ENCODE measurements at regions of chr19 and their contacts with region 1.

Region 1: DNA sequence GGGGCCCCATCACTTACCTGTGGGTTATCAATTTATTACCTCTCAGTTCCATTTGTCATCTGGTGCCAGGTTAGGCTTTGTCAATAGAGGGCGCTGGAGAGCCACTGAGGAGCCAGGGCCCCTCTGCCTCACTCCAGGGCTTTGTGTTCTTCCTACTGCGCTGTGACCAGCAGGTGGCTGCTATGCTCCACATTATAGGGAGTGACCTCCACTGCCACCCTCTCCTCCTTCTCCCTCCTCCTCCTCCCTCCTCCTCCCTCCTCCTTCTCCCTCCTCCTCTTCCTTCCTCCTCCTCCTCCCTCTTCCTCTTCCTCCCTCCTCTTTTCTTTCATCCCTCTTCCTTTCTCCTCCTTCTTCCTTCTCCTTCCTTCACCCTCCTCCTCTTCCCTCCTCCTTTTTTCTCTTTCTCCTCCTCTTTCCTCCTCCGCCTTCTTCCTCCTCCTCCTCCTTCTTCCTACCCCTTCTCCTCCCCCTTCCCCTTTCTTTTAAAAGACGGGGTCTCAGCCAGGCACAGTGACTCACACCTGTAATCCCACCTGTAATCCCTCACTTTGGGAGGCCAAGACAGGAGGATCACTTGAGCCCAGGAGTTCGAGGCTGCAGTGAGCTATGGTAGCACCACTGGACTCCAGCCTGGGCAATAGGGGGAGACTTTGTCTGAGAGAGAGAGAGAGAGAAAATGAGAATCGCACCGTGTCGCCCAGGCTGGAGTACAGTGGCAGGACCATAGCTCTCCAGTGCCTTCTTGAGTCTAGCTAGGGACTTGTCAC is 10.3 kb upstream of the ZBTB32 start:
- DNase-seq: peak; percentile 97
- H3K4me3 Mint-ChIP-seq: no peak overlapping the region
- H3K27ac Mint-ChIP-seq: peak overlapping the region; percentile 77
- H3K4me1 Mint-ChIP-seq: peaks cover 24% of the 10 kb centered on the region
- H3K27me3 Mint-ChIP-seq: no peaks in the 10 kb centered on the region

Region 2: DNA sequence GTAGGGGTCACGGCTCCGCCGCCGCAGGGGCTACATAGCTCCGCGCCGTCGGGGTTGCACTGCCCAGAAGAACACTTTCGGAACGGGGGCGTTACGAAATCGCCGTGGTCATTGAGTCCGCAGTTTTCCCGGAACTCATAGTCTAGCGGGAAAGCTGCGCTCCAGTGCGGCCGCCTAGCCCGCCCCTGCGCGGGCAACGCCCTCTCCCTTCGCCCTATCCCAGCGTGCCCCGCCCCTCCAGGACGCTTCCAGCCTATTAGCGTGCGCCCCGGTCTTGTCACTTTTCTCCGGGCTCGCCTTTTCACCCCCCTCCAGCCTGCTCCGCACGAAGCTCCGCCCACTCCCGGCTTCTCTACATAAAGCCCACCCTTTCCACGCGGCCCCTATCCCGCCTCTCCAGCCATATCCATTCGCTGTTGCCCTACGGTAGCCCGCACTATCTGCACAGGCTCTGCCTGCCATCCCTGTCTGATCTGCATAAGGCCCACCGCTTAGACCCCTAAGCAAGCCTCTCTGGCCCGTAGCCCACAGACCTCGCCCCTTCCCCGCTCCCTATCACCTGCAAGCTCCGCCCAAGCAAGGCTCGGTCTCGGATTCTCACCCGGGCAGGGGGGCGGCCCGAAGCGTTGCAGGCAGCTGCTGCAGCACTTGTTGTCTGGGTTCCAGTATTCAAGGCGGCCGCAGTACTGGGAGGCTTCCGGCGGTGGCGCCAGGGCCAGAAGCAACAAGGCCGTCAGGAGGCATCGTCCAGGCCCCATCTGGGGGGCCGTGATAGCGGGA is 46.6 kb after region 1 on chr19:
- CTCF ChIA-PET with region 1: interaction called, 10 read pairs
- intact Hi-C with region 1: loop called (anchors 1 kb)
- DNase-seq: peak; percentile 99
- H3K4me3 Mint-ChIP-seq: peak overlapping the region; percentile 89
- H3K27ac Mint-ChIP-seq: peak overlapping the region; percentile 97
- H3K4me1 Mint-ChIP-seq: peaks cover 41% of the 10 kb centered on the region
- H3K27me3 Mint-ChIP-seq: no peaks in the 10 kb centered on the region

Region 3: DNA sequence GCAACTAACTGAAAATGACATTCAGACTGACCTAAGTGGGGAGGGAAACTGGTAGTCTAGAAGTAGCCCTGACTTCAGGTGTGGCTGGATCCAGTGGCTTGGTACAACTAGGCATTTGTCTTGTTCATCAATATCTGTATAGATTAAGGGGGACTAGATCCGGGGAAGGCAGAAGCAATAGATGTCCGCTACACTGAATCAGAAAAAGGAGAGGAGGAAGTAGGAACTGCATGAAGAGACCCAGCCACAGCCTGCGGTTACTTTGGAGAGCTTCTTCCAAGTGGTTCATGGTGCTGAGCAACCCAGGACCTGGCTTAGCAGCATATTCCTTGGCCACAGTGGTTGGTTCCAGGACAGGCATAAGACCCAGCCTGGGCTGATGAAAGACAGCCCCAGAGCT is 128.6 kb after region 1 on chr19:
- CTCF ChIA-PET with region 1: interaction called, 44 read pairs
- intact Hi-C with region 1: loop called (anchors 1 kb)
- DNase-seq: no peak
- H3K4me3 Mint-ChIP-seq: no peak overlapping the region
- H3K27ac Mint-ChIP-seq: no peak overlapping the region
- H3K4me1 Mint-ChIP-seq: peaks cover 3% of the 10 kb centered on the region
- H3K27me3 Mint-ChIP-seq: peaks cover 17% of the 10 kb centered on the region

Region 4: DNA sequence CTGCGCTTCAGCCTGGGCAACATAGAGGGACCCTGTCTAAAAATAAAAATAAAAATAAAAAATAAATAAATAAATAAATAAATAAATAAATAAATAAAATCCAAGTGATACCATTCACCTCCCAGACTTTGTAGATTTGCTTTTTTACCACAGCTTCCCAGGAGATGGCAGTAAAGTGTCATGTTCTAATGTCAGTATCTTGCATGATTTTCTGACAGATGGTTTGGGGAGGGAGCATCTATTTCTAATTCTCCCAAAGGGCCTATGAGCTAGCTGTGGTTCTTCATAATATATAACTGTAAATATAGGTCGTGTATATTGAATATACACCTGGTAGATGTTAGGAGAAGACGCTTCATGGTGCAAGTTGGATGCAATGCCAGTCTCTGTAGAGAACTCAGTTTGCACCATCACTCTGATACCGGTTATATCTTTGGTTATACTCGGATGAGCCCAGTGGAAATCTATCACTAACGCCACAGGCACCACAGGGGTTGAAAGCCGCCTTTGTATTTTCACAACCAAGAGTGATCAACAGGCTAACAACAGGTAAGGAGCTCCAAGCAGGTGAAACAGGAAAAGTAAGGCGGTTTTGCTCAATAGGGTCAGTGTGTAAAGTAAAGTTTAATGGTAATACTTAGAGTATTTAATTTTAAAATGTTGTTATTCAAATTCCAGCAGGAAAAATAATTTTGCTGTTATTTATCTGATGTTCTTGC is 188.3 kb after region 1 on chr19:
- CTCF ChIA-PET with region 1: interaction called, 3 read pairs
- intact Hi-C with region 1: loop called (anchors 5 kb)
- DNase-seq: peak; percentile 58
- H3K4me3 Mint-ChIP-seq: no peak overlapping the region
- H3K27ac Mint-ChIP-seq: no peak overlapping the region
- H3K4me1 Mint-ChIP-seq: peaks cover 9% of the 10 kb centered on the region
- H3K27me3 Mint-ChIP-seq: peaks cover 21% of the 10 kb centered on the region

Measured in activated naive CD4-positive, alpha-beta T cell treated with anti-CD3 and anti-CD28 coated beads for 36 hours (primary cell).